ENCODE measurements at regions of chr5 and their contacts with region 1.

Region 1: DNA sequence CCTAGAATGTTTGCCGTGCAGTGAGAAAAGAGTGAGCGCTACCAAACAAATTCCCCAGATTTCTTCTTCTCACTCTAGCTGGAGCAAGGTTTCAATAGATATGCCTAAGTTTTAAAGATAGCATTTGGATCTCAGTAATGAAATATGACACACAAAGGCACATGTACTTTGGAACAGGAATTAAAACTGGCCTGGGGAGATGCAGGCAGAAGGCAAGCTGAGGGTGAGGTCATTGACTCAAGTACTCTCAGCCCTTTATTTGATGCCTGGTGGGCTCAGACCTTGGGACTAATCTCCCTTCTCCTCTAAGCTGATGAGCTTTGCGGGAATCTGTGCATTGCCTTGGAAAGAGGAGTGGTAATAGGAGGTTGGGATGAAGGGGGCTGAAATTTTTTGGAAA is 323.3 kb upstream of the SLC30A5 start:
- DNase-seq: no peak
- ATAC-seq: no peak
- H3K4me3 Mint-ChIP-seq: no peak overlapping the region
- H3K27ac Mint-ChIP-seq: no peak overlapping the region
- H3K4me1 Mint-ChIP-seq: no peaks in the 10 kb centered on the region
- H3K27me3 Mint-ChIP-seq: no peaks in the 10 kb centered on the region; the same call in 1 of the 2 replicates
- CTCF ChIP-seq: no peak

Region 2: GRCh38 chr5:68745448-68745847 is 25.1 kb before region 1 on chr5:
- CTCF ChIA-PET with region 1: no interaction called
- POLR2A ChIA-PET with region 1: no interaction called
- DNase-seq: no peak
- ATAC-seq: no peak
- H3K4me3 Mint-ChIP-seq: no peak overlapping the region
- H3K27ac Mint-ChIP-seq: no peak overlapping the region
- H3K4me1 Mint-ChIP-seq: peaks cover 21% of the 10 kb centered on the region
- H3K27me3 Mint-ChIP-seq: no peaks in the 10 kb centered on the region
- CTCF ChIP-seq: 0 out of 2 replicates have a peak, but pooled peaks have one; percentile 18

Region 3: DNA sequence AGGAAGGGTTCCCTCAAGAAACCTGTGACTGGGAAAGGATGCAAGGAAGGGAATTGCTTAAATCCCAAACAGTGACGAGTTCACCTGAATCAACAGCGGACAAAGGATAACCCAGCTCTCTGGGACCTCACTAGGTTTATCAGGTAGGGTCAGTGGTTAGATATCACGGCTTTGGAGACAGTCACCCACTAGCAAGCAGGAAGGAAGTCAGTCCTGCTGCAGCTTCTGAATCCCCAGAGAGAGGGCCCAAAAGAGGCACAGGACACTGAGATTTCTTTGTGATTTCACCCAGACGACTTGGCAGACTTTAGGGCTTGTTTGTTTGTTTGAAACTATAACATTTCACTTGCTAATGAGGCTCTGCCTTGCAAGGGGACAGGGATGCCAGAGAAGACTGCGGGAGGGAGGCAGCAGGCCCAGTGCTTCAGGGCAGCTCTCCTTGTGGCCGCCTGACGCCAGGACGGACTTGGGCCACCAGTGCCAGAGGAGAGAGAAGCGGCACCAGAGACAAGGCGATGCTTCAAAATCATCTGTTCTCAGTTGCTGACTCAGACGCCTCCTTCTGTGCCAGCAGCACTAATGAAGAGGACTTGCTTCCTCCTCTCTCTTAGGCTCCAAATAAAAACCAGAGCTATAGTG is 47.6 kb after region 1 on chr5:
- CTCF ChIA-PET with region 1: no interaction called
- POLR2A ChIA-PET with region 1: interaction called, 10 read pairs
- DNase-seq: peak; percentile 46
- ATAC-seq: peak; percentile 93
- H3K4me3 Mint-ChIP-seq: no peak overlapping the region
- H3K27ac Mint-ChIP-seq: peak overlapping the region; percentile 92
- H3K4me1 Mint-ChIP-seq: peaks cover 40% of the 10 kb centered on the region
- H3K27me3 Mint-ChIP-seq: no peaks in the 10 kb centered on the region
- CTCF ChIP-seq: no peak

Measured in WTC11 (cell line).